Natural killer cell (primary cell): ENCODE measurements at regions of chr5 and their contacts with region 1.

Region 1: GRCh38 chr5:76601470-76601869 is 21.7 kb downstream of the F2RL2 start:
- DNase-seq: peak in 1 of 2 donors; percentile 76
- ATAC-seq: peak; percentile 64 to 87 (median 80)
- H3K4me3 ChIP-seq: no peak overlapping the region
- H3K4me3 Mint-ChIP-seq: no peak overlapping the region
- H3K27ac ChIP-seq: no peak overlapping the region
- H3K27ac Mint-ChIP-seq: peak overlapping the region; percentile 42 to 67
- H3K4me1 ChIP-seq: peaks cover 10% of the 10 kb centered on the region
- H3K4me1 Mint-ChIP-seq: peaks cover 40 to 49% of the 10 kb centered on the region in 2 donors
- H3K27me3 ChIP-seq: no peaks in the 10 kb centered on the region
- H3K27me3 Mint-ChIP-seq: no peaks in the 10 kb centered on the region
- CTCF ChIP-seq: peak; percentile 83

Region 2: GRCh38 chr5:76660360-76660759 is 58.9 kb after region 1 on chr5:
- intact Hi-C with region 1: no loop called
- DNase-seq: no peak
- ATAC-seq: no peak
- H3K4me3 ChIP-seq: no peak overlapping the region
- H3K4me3 Mint-ChIP-seq: no peak overlapping the region
- H3K27ac ChIP-seq: no peak overlapping the region
- H3K27ac Mint-ChIP-seq: peak overlapping the region in 1 of 2 donors; percentile 68
- H3K4me1 ChIP-seq: no peaks in the 10 kb centered on the region
- H3K4me1 Mint-ChIP-seq: peaks cover 11 to 18% of the 10 kb centered on the region in 2 donors
- H3K27me3 ChIP-seq: no peaks in the 10 kb centered on the region
- H3K27me3 Mint-ChIP-seq: no peaks in the 10 kb centered on the region
- CTCF ChIP-seq: no peak

Region 3: GRCh38 chr5:76771705-76772405 is 170.4 kb after region 1 on chr5:
- intact Hi-C with region 1: loop called (anchors 1 kb)
- DNase-seq: no peak
- ATAC-seq: no peak
- H3K4me3 ChIP-seq: no peak overlapping the region
- H3K4me3 Mint-ChIP-seq: no peak overlapping the region
- H3K27ac ChIP-seq: no peak overlapping the region
- H3K27ac Mint-ChIP-seq: no peak overlapping the region
- H3K4me1 ChIP-seq: no peaks in the 10 kb centered on the region
- H3K4me1 Mint-ChIP-seq: no peaks in the 10 kb centered on the region
- H3K27me3 ChIP-seq: no peaks in the 10 kb centered on the region
- H3K27me3 Mint-ChIP-seq: no peaks in the 10 kb centered on the region
- CTCF ChIP-seq: no peak